ENCODE measurements at regions of chr1 and their contacts with region 1.

Region 1: GRCh38 chr1:67561704-67562113 is 123.3 kb upstream of the GADD45A start:
- DNase-seq: peak; percentile 90
- H3K4me3 Mint-ChIP-seq: no peak overlapping the region
- H3K27ac Mint-ChIP-seq: no peak overlapping the region
- H3K4me1 Mint-ChIP-seq: peaks cover 6% of the 10 kb centered on the region
- H3K27me3 Mint-ChIP-seq: peaks cover 3% of the 10 kb centered on the region

Region 2: DNA sequence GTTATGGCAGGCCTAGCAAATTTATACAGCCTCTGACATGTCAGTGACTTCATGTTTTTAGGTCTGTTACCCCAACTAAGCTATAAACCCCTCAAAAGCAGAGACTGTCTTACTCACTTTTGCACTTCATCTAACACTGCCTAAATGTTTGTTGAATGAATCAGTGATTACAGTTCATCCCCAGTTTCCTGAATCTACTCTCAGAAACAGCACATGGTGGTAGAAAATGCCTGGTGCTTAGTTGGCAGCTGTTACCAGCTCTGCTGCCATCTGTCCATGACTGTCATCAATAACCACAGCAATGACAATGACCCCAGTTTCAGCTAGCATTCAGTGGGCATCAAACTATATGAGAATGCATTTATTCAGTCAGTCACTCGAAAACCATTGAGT is 21.0 kb before region 1 on chr1:
- CTCF ChIA-PET with region 1: interaction called, 26 read pairs
- POLR2A ChIA-PET with region 1: no interaction called
- intact Hi-C with region 1: loop called (anchors 1 kb)
- DNase-seq: no peak
- H3K4me3 Mint-ChIP-seq: no peak overlapping the region
- H3K27ac Mint-ChIP-seq: no peak overlapping the region
- H3K4me1 Mint-ChIP-seq: no peaks in the 10 kb centered on the region
- H3K27me3 Mint-ChIP-seq: no peaks in the 10 kb centered on the region

Region 3: GRCh38 chr1:67723620-67724019 is 161.9 kb after region 1 on chr1:
- CTCF ChIA-PET with region 1: interaction called, 10 read pairs
- POLR2A ChIA-PET with region 1: no interaction called
- intact Hi-C with region 1: no loop called
- DNase-seq: peak; percentile 31
- H3K4me3 Mint-ChIP-seq: no peak overlapping the region
- H3K27ac Mint-ChIP-seq: no peak overlapping the region
- H3K4me1 Mint-ChIP-seq: peaks cover 9% of the 10 kb centered on the region
- H3K27me3 Mint-ChIP-seq: no peaks in the 10 kb centered on the region

Region 4: DNA sequence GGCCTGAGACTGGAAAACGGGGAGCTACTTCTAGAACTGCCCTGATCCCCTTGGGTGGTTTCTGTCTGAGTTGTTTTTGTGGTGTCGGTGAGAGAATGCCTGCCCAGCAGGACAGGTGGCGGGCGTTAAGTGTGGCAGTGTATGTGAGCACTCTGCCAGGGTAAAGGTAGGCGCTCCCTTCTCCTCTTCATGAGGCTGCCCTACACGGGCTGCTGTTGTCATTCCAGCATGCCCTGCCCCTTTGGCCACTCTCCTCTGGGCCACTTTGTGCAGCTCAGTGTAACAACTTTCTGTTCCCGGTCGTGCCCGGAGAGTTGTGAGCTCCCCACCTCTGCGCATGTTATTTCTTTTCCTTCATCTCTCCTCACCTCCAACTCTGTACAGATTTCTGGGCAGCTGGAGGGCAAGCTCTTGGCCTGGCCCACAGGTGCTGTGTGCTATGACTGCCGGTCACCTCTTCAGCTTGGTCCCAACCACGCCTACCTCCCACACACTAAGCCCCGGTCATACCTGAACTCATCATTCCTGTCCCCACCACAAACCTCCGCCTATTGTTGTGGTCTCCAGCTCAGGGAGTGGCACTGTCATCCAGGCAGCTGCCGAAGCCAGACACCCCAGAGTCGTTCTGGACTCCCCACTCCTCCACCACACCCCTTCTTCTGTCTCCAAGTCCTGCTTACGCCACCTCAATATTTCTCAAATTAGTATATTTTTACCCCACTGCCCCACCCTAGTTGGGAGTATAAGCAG is 192.2 kb after region 1 on chr1:
- CTCF ChIA-PET with region 1: interaction called, 281 read pairs
- POLR2A ChIA-PET with region 1: no interaction called
- intact Hi-C with region 1: no loop called
- DNase-seq: peak; percentile 61
- H3K4me3 Mint-ChIP-seq: no peak overlapping the region
- H3K27ac Mint-ChIP-seq: no peak overlapping the region
- H3K4me1 Mint-ChIP-seq: peaks cover 17% of the 10 kb centered on the region
- H3K27me3 Mint-ChIP-seq: peaks cover 4% of the 10 kb centered on the region

Region 5: DNA sequence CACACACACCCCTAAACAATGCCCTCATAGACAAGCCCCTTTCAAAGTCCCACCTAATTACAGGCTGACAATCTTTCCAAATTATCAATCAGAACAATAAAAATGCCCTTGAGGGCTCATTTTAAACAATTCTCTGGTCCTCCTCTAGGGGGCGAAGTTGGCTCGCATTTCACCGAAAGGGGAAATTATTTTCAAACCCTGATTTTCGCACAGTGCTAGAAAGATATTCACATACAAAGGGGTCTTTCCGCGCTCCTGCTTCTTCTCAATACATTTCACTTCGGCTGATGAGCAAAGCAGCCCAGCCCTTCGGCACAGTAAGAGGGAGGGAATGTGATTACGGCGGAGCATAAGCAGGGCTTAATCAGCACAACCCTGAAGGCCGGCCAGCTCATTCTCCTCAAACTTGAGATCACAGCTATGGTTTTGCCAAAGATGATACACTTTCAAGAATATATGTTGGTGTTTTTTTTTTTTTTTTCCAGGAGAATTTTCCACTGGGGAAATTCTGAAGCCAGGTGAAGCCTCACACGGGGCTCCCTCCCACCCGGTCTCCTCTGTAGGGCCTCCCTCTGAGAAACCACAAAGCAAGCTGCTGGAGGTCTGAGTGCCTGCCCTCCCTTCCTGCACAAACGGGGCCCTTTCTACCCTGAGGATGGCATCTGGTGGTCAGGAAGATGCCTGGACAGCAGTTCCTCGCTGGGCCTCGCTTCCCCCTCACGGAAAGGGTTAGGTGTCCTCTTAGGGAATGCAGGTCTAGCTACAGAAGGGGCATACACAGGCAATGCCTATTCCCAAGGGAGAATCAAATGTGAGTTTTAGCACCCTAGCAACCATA is 204.7 kb after region 1 on chr1:
- CTCF ChIA-PET with region 1: interaction called, 281 read pairs
- POLR2A ChIA-PET with region 1: no interaction called
- intact Hi-C with region 1: no loop called
- DNase-seq: peak; percentile 54
- H3K4me3 Mint-ChIP-seq: peak overlapping the region; percentile 11
- H3K27ac Mint-ChIP-seq: no peak overlapping the region
- H3K4me1 Mint-ChIP-seq: peaks cover 14% of the 10 kb centered on the region
- H3K27me3 Mint-ChIP-seq: peaks cover 40% of the 10 kb centered on the region

Region 6: DNA sequence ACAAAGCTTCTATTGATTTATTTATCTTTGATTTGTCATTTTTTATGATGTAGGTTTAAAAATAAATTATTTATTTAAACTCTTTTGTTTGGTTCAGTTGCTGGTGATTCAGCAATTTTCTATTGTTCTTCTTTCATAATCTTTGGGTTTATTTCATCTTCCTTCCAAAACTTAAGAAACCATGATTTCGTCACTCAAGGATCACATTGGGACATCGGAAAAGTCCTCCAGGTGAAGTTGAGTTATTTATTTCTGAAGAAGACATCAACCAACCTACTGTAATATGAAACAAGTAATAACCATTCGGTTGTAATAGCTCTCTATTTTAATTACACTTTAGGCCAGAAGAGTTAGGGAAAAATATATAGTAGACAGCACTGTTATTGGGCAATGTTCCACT is 693.6 kb after region 1 on chr1:
- CTCF ChIA-PET with region 1: no interaction called
- POLR2A ChIA-PET with region 1: no interaction called
- intact Hi-C with region 1: no loop called
- DNase-seq: no peak
- H3K4me3 Mint-ChIP-seq: no peak overlapping the region
- H3K27ac Mint-ChIP-seq: no peak overlapping the region
- H3K4me1 Mint-ChIP-seq: no peaks in the 10 kb centered on the region
- H3K27me3 Mint-ChIP-seq: no peaks in the 10 kb centered on the region